ENCODE measurements at regions of chr2 and their contacts with region 1.

Region 1: GRCh38 chr2:181742922-181743722 is 62.8 kb upstream of the NEUROD1 start:
- DNase-seq: peak; percentile 53
- H3K4me3 Mint-ChIP-seq: no peak overlapping the region
- H3K27ac Mint-ChIP-seq: no peak overlapping the region
- H3K4me1 Mint-ChIP-seq: no peaks in the 10 kb centered on the region
- H3K27me3 Mint-ChIP-seq: peaks cover 4% of the 10 kb centered on the region

Region 2: GRCh38 chr2:181235683-181236459 is 507.3 kb before region 1 on chr2:
- CTCF ChIA-PET with region 1: no interaction called
- DNase-seq: no peak
- H3K4me3 Mint-ChIP-seq: no peak overlapping the region
- H3K27ac Mint-ChIP-seq: no peak overlapping the region
- H3K4me1 Mint-ChIP-seq: peaks cover 37% of the 10 kb centered on the region
- H3K27me3 Mint-ChIP-seq: no peaks in the 10 kb centered on the region

Region 3: DNA sequence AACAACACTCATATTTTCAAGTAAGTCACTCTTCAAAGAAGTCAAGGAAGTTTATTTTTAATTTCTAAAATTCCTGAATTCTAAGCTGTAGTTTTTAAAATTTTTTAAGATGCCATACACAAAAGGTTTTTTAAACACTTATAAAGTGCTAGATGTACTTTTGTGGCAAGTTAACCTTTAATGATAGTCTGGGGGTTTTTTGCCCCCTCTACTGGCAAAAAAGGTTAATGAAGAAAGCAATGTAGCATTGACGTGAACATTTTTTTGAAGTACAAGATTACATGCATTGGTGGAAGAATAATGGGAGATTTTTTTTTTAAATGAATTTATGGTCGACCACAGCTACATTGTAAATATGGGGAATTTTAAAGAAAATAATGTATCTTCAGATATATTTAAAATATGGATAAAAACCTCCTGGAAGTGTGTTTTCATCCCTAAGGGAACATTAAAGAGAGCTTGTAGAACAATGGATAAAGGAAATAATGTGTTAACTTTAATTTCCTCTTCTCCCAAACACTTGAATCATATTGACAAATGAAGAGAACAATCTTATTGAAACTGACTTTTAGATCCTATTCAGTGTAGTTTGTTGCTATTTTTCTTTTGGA is 161.0 kb after region 1 on chr2:
- CTCF ChIA-PET with region 1: interaction called, 17 read pairs
- DNase-seq: no peak
- H3K4me3 Mint-ChIP-seq: no peak overlapping the region
- H3K27ac Mint-ChIP-seq: no peak overlapping the region
- H3K4me1 Mint-ChIP-seq: peaks cover 16% of the 10 kb centered on the region
- H3K27me3 Mint-ChIP-seq: no peaks in the 10 kb centered on the region

Region 4: DNA sequence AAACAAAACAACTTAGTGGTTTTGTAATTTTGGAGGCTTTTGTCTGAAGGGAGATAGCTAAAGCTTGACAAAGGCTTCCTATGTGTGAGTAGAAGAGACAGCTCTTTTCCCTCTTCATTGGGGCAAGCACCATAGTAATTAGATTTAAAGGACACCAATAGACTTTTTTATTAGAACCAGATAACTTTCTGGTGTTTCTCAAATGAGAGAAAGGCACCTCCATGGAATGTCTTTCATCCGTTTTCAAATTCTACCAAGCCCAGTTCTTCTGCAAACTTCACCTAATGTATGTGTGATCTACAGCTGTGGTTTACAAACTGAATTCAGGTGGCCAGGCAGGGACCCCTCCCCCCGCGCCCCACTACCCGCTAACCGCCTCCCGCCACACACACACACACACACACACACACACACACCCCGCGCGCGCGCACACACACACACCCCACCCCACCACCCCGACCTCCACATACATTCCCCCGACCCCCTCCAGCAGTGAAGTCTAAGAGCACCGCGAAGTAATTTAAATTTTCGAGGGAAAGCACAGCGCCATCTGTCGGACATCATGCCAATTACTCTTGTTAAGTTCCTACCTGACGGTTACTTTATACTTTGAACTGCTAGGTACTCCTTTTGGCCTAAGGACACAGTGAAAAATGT is 210.9 kb after region 1 on chr2:
- CTCF ChIA-PET with region 1: interaction called, 11 read pairs
- DNase-seq: peak; percentile 76
- H3K4me3 Mint-ChIP-seq: peak overlapping the region; percentile 9
- H3K27ac Mint-ChIP-seq: no peak overlapping the region
- H3K4me1 Mint-ChIP-seq: peaks cover 9% of the 10 kb centered on the region
- H3K27me3 Mint-ChIP-seq: peaks cover 21% of the 10 kb centered on the region

Region 5: DNA sequence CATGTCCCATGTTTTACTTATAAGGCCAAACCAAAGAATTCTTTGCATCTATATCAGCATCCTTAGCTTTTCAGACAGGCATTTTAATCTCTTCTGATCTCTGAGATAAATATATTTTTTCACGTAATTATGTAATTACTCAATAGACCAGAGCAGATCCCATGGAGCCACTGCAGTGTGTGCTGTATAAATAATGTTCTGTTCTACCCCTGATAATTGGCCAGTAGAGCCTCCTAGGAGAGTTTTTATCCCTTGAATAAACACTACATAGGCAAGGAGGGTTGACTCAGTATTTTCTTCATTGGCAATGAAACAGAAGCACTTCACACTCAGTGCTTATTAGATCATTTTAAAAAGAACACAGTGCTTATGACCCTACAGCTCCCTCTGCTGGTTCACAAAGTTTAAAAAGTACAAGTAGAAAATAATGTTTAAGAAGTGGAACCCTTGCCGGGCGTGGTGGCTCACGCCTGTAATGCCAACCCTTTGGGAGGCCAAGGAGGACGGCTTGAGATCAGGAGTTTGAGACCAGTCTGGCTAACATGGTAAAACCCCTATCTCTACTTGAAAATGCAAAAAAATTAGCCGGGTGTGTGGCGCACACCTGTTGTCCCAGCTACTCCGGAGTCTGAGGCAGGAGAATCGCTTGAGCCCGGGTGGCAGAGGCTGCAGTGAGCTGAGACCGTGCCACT is 334.5 kb after region 1 on chr2:
- CTCF ChIA-PET with region 1: interaction called, 19 read pairs
- DNase-seq: no peak
- H3K4me3 Mint-ChIP-seq: no peak overlapping the region
- H3K27ac Mint-ChIP-seq: no peak overlapping the region
- H3K4me1 Mint-ChIP-seq: no peaks in the 10 kb centered on the region
- H3K27me3 Mint-ChIP-seq: peaks cover 3% of the 10 kb centered on the region